H1 (cell line): ENCODE measurements at regions of chr7 and their contacts with region 1.

Region 1: DNA sequence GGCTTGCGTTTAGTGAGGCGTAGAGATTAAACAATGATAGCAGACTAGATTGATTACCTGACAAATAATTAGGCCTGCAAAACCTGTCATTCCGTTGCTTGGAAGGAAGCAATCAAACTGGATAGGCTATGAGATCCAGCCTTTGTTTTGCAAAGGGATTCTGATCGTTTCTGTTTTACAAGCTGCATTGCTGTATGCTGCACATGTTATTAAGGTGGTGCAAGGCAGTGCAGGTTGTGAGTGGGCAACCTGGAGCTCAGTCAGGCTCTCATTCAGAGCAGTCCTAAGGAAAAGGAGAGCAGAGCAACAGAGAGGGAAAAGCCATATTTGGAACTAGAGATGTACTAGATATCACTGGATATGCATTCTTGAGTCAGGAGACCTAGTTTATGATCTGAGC is 6.9 kb upstream of the NOBOX start:
- DNase-seq: no peak
- H3K4me3 ChIP-seq: no peak overlapping the region
- H3K27ac ChIP-seq: no peak overlapping the region
- H3K4me1 ChIP-seq: peaks cover 0 to 6% (median 3%) of the 10 kb centered on the region in 4 experiments; a peak in 4 of 7 replicates
- H3K27me3 ChIP-seq: peaks cover 0 to 2% (median 0%) of the 10 kb centered on the region in 4 experiments; a peak in 1 of 7 replicates
- CTCF ChIP-seq: no peak
- EP300 ChIP-seq: no peak
- POLR2A ChIP-seq: no peak
- RAD21 ChIP-seq: no peak

Region 2: GRCh38 chr7:144399946-144400345 is 10.5 kb before region 1 on chr7:
- CTCF ChIA-PET with region 1: interaction called, 10 read pairs
- POLR2A ChIA-PET with region 1: no interaction called
- DNase-seq: peak in 1 of 2 experiments; percentile 32
- H3K4me3 ChIP-seq: no peak overlapping the region
- H3K27ac ChIP-seq: no peak overlapping the region
- H3K4me1 ChIP-seq: no peaks in the 10 kb centered on the region
- H3K27me3 ChIP-seq: no peaks in the 10 kb centered on the region
- CTCF ChIP-seq: no peak
- EP300 ChIP-seq: no peak
- POLR2A ChIP-seq: no peak
- RAD21 ChIP-seq: no peak